Common myeloid progenitor, CD34-positive (primary cell): ENCODE measurements at regions of chr7 and their contacts with region 1.

Region 1: DNA sequence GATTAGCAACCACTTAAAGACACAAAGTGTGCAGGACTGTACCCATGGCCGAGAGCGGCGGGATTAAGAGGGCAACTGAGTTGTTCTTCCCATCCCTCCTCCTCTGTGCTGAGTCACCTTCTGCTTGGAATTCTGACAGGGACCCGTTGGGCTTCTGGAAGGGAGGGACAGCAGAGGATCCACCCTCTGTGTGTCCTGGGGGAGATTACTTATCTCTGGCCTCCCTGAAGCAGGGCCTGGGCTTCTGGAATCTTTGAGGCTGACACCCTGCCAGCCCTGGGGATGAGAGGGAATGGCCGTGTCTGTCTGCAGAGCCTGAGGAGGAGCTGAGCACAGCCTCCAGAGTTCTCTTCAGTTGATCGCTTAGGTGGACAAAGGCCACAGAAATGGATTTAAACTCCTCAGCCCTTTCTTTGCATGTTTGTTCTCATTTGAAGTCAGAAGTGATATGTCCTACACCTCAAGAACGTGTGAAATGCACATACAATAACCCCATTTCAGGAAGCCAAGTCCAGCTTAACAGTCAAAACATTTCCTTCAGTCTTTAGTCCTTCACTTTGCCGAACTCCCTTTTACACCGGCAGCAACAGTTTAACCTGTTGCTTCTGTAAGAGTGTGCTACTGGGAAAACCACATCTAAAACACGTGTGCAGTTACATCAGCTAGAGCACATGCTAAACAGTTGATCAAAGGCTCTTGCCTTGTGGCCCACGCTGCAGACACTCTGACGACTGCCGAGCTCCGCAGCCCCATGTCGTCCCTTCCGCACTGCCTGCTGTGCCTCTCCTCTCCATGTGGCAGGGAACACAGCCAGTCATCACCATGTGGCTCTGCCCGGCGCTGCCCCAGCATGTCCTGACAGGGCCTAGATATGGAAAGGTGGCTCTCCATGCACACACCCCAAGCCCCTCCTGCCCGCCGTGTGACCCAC is 55.7 kb downstream of the IKZF1 start:
- DNase-seq: no peak
- H3K4me3 ChIP-seq: no peak overlapping the region
- H3K27ac ChIP-seq: peak overlapping the region in 1 of 2 experiments; percentile 74
- H3K4me1 ChIP-seq: peaks cover 19 to 95% (median 83%) of the 10 kb centered on the region in 4 experiments
- H3K27me3 ChIP-seq: no peaks in the 10 kb centered on the region

Region 2: GRCh38 chr7:50273870-50274269 is 86.4 kb before region 1 on chr7:
- CTCF ChIA-PET with region 1: no interaction called
- POLR2A ChIA-PET with region 1: no interaction called
- DNase-seq: no peak
- H3K4me3 ChIP-seq: no peak overlapping the region
- H3K27ac ChIP-seq: no peak overlapping the region
- H3K4me1 ChIP-seq: peaks cover 9 to 35% (median 21%) of the 10 kb centered on the region in 4 experiments
- H3K27me3 ChIP-seq: no peaks in the 10 kb centered on the region

Region 3: GRCh38 chr7:50335795-50336754 is 24.2 kb before region 1 on chr7:
- CTCF ChIA-PET with region 1: interaction called, 25 read pairs
- POLR2A ChIA-PET with region 1: interaction called, 8 read pairs
- DNase-seq: peak; percentile 69 to 91 (median 91)
- H3K4me3 ChIP-seq: peak overlapping the region in 2 of 7 experiments; percentile 1 to 12
- H3K27ac ChIP-seq: peak overlapping the region; percentile 55 to 87
- H3K4me1 ChIP-seq: peaks cover 64 to 100% (median 97%) of the 10 kb centered on the region in 4 experiments
- H3K27me3 ChIP-seq: no peaks in the 10 kb centered on the region

Region 4: DNA sequence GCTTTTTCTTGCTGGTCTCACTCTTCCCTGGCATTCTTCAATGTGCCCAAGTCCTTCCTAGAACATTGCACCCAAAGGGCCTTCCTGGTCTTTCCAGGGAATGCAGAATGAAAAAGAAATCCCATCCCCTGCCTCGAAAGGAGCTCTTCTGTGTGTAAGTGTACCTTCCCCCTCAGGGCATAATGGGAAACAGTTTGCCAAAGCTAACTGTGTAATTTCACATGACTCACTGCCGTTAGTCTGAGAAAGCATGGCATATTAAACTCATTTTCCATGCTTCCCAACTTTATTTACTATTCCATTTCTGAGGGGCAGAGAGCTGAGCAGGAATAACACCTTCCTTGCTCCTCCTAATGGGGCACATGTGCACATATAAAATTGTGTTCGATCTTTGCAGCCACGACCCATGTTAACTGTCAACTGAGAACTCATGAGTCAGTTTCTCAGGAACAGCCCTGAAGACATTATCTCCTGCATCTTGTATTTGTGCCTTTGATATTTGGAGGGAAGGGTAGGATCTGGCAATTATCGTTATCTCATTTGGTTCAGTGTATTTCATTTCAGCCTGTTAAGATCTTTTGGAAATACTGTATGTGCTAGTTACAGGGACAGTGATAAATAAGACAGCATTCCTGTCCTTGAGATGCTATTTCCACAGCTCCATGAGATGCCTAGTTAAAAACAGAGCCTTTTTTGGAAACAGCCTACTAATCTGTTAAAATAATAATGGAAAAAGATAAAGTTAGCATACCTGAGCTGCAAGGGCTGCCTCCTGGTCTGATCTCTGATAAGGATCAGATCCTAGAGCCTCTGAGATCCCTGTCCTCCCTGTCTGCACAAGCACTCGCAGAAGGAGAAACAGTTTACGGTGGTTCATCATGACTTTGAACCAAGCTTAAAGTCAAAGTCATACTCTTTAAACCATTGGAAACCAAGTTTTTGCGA is 13.4 kb before region 1 on chr7:
- CTCF ChIA-PET with region 1: interaction called, 31 read pairs
- POLR2A ChIA-PET with region 1: interaction called, 6 read pairs
- DNase-seq: no peak
- H3K4me3 ChIP-seq: no peak overlapping the region
- H3K27ac ChIP-seq: no peak overlapping the region
- H3K4me1 ChIP-seq: peaks cover 27 to 63% (median 50%) of the 10 kb centered on the region in 4 experiments
- H3K27me3 ChIP-seq: no peaks in the 10 kb centered on the region